Head of caudate nucleus (tissue), 42 donors: ENCODE measurements at regions of chr1 and their contacts with region 1.

Region 1: GRCh38 chr1:172532700-172533509 is at the start of gene SUCO:
- DNase-seq: peak; percentile 99 to 100 (median 100)

Region 2: DNA sequence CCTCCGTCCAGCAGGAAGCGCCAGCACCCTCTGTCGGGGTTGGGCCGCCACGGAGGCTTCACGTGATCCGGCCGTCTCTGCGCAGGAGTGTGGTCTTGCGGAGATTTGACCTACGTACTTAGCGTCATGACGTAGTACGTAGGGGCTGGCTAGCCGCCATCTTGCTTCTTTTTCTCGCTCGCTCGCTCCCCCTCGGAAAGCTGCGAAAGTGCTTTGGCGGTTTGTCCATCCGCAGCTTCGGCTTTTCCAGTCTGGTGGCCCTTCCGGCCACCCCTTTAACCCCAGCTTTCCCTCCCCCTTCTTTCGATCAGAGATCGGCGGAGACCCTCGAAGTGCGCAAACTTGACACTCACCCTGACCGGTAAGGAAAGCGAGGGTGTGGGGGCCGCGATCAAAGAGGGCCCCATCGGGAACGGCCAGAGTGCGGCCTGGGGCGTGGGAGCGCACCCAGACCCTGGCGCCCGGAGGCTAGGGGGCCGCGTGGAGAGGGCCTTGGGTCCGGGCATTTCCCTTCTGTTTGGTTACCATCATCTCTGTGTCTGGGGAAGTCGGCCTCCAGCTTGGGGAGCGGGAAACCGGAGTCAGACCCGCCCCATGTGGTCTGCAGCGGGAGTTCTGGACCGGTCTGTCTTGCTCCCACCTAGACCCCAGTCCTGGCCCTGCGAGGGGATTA is 1047.4 kb before region 1 on chr1 and contains the start of gene PRRC2C:
- intact Hi-C with region 1: loop called (anchors 10 kb)
- DNase-seq: peak; percentile 94 to 99 (median 98)

Region 3: GRCh38 chr1:171741872-171742576 is 790.9 kb before region 1 on chr1 and contains the start of gene VAMP4:
- intact Hi-C with region 1: loop called (anchors 5 kb)
- DNase-seq: peak; percentile 72 to 96 (median 90)

Region 4: DNA sequence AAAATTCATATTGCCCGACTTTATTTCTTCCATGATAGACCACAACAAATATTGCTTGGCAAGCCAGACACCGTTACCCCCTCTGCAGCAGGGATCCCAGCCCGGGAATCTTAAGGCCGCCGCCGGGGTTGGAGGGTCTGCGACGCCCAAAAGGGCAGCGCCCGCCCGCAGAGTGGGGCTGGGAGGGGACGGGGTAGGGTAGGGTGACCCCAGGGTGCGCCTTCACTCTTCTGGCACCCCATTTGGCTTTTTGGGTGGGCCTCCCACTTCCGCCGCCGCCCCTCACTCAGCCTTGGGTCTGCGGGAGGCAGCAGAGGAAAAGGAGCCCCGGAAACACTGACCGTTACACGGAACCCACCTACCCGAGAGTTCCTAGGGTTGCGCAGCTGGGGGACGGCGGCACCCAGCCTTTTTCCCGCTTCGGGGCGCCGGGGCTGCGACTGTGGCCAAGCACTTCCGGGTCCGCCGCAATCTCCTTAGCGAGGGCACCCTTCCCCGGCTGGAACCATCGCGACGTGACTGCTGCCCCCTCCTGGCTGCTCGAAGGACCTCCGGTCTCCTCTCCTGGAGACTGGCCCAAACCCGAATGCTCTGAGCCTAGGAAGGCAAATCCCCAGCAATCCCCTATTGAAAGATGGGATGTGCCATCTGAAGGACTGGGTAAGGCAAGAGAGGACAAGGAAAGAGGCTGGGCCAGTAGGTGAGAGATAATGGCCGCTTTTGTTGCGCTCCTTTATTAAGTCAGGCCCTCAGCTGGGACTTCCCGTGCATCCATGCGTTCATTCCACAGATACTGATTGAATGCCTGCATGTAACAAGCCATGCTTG is 89.1 kb before region 1 on chr1 and contains the start of gene PIGC:
- intact Hi-C with region 1: loop called (anchors 10 kb)
- DNase-seq: peak; percentile 82 to 97 (median 93)

Region 5: DNA sequence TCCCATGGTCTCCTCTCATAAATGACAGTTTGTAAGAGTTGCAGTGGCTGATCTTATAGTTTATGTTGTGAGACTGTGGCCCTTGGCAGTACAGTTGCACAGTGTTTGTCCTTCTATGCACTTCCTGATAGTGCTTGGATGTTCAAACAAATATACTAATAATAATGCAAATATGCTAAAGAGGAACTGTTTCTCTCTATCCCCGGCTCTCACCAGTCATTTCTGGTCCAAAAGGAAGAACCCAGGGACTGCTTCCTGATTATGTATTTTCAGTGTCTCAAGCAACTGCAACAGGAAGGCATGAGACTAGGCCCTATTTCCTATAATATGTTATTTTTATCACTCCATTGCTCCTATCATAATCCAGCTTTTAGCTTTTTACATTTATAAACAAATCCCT is 17.0 kb before region 1 on chr1:
- intact Hi-C with region 1: no loop called
- DNase-seq: no peak